Heart right ventricle (tissue), 16 donors: ENCODE measurements at regions of chr20 and their contacts with region 1.

Region 1: DNA sequence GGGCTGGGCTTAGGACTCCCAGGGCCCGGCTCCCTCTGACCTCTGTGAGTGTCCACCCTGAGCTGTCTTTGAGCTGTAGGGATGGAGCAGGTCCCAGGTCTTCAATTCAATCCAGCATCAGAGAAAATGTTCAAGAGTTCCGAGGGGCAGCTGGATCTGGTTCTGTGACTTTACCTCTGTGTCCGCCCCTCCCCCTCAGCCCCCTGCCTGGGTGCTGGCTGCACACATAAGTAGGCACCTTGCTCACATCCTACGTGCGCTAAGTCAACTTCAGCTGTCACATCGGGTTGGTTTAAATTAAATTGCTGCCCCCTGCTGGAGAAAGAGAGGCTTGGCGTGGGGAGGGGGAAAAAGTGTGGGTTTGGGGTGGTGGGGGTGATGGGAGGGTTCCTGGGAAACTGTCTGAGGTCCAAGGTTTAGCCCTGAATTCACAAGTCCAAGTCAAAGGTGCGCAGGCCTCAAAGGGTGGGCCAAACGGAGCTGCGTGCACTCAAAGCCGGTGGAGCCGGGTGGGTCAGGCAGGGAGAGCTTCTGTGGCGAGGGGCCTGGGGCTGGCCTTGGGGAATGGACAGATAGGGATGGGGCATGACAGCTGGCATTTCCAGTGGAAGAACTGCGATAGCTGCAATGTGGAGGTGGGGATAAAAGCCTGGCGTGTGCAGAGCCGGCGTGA is 3.0 kb downstream of the WFDC5 start:
- DNase-seq: no peak
- ATAC-seq: no peak
- H3K4me3 ChIP-seq: no peak overlapping the region
- H3K27ac ChIP-seq: no peak overlapping the region
- H3K4me1 ChIP-seq: no peaks in the 10 kb centered on the region
- H3K27me3 ChIP-seq: peaks cover 0 to 56% (median 20%) of the 10 kb centered on the region in 7 donors
- CTCF ChIP-seq: peak; percentile 10 to 50 (median 45)

Region 2: DNA sequence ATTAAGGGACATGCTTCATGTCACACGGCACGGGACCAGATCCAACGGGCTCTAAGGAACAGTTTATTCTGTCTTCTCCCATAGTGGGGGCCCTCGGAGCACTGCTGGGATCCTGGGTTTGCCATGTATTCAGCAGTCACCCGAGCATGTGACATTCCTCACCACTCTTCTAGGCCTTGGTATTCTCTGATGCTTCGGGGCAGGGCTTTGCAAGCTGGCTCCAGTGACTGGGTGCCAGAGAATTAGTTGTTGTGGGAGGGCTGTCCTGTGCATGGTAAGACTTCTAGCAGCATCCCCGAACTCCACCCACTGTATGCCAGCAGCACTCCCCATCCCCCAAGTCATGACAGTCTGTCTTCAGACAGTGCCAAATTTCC is 391.3 kb before region 1 on chr20:
- intact Hi-C with region 1: no loop called
- DNase-seq: no peak
- ATAC-seq: peak; percentile 18 to 75 (median 46)
- H3K4me3 ChIP-seq: no peak overlapping the region
- H3K27ac ChIP-seq: peak overlapping the region in 7 of 10 donors; percentile 4 to 78 (median 63)
- H3K4me1 ChIP-seq: peaks cover 9 to 32% (median 17%) of the 10 kb centered on the region in 9 donors
- H3K27me3 ChIP-seq: no peaks in the 10 kb centered on the region
- CTCF ChIP-seq: no peak

Region 3: DNA sequence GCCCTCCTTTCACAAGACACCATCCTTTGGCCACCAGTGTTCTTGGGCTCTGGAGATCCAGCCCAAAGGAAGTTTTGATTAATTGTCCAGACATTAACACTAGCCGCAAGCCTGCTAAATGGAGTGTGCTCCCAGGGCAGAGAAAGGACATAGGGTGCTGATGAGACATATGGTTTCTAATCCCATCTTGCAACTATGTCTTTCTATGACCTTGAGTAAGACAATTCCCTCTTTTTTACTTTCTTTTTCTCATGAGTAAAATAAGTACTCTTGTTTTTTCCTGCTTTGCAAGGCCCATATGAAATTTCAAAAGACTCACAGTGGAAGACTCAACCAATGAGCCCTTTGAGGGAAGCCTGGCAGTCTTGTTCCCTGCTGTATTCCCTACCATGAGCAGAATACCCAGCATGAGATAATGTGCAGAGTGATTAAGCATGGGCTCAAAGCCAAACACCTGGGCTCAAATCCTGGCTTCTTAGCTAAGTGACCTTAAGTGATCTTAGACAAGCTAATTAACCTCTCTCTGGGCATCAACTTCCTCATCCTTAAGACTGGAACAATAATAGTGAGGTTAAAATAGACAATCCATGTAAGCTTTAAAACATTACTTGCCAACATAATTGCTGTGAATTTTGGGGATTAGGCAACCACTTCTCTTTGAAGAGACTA is 593.2 kb after region 1 on chr20 and contains the start of gene WFDC10B:
- intact Hi-C with region 1: loop called in 1 of 10 experiments (anchors 5 kb)
- DNase-seq: no peak
- ATAC-seq: no peak
- H3K4me3 ChIP-seq: no peak within 1 kb of the TSS
- H3K27ac ChIP-seq: no peak within 1 kb of the TSS
- H3K4me1 ChIP-seq: no peaks in the 10 kb centered on the region
- H3K27me3 ChIP-seq: peaks cover 0 to 13% (median 0%) of the 10 kb centered on the region in 7 donors
- CTCF ChIP-seq: no peak
- total RNA-seq, gene WFDC10B: not detected